Sigmoid colon (tissue), 7 donors: ENCODE measurements at regions of chr17 and their contacts with region 1.

Region 1: DNA sequence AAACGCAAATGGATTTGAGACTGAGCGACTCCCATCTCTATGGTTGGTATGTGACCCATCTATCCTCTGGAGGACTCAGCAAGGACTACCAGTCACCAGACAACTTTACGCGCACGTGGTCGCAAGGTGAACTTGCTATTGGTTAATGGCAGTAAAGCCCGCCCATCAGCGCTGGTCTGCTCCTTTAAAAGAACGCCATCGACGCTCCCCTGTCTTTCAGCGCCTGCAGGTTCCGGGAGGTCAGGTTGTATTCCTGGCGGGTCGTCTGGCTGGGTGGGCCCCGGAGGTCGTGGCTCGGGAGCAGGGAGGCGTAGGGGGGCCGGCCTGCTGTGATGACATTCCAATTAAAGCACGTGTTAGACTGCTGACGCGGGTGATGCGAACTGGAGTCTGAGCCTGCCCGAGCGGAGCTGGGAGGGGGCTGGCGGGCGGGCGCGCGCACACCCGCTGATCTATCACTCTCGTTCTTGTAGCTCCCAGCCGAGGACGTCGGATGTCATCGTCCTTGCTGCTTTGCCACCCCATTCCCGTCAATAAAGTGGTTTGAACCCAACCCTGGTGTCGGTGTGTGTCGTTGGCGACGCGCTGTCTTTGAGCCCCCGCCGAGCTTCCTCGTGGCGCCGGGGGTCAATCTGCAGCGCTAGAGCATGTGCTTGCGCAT is 15.9 kb upstream of the ERN1 start:
- DNase-seq: peak; percentile 100
- H3K4me3 ChIP-seq: peak overlapping the region; percentile 62 to 89 (median 74)
- H3K27ac ChIP-seq: peak overlapping the region; percentile 91 to 96 (median 94)
- H3K4me1 ChIP-seq: peaks cover 0 to 26% (median 18%) of the 10 kb centered on the region in 4 donors
- H3K27me3 ChIP-seq: no peaks in the 10 kb centered on the region
- CTCF ChIP-seq: no peak
- EP300 ChIP-seq: peak in 1 of 4 donors; percentile 34
- POLR2A ChIP-seq: peak; percentile 98 to 99

Region 2: GRCh38 chr17:64129764-64130558 is 15.9 kb before region 1 on chr17 and contains the start of gene ERN1:
- intact Hi-C with region 1: loop called (anchors 1 kb)
- DNase-seq: peak; percentile 97
- H3K4me3 ChIP-seq: peak within 1 kb of the TSS; percentile 52 to 92 (median 79)
- H3K27ac ChIP-seq: peak within 1 kb of the TSS; percentile 96 to 99 (median 98)
- H3K4me1 ChIP-seq: peaks cover 0 to 32% (median 20%) of the 10 kb centered on the region in 4 donors
- H3K27me3 ChIP-seq: no peaks in the 10 kb centered on the region
- CTCF ChIP-seq: no peak
- EP300 ChIP-seq: no peak
- POLR2A ChIP-seq: peak; percentile 34 to 60
- total RNA-seq, gene ERN1: 7.1 to 9.4 (median 8.2) TPM

Region 3: GRCh38 chr17:64262417-64263260 is 116.8 kb after region 1 on chr17 and contains the start of gene TEX2:
- intact Hi-C with region 1: loop called (anchors 1 kb)
- DNase-seq: peak; percentile 78
- H3K4me3 ChIP-seq: peak within 1 kb of the TSS; percentile 98 to 99 (median 98)
- H3K27ac ChIP-seq: peak within 1 kb of the TSS; percentile 94 to 97 (median 94)
- H3K4me1 ChIP-seq: peaks cover 0 to 38% (median 29%) of the 10 kb centered on the region in 4 donors
- H3K27me3 ChIP-seq: no peaks in the 10 kb centered on the region
- CTCF ChIP-seq: no peak
- EP300 ChIP-seq: no peak
- POLR2A ChIP-seq: no peak
- total RNA-seq, gene TEX2: 39.3 to 50.7 (median 42.5) TPM

Region 4: DNA sequence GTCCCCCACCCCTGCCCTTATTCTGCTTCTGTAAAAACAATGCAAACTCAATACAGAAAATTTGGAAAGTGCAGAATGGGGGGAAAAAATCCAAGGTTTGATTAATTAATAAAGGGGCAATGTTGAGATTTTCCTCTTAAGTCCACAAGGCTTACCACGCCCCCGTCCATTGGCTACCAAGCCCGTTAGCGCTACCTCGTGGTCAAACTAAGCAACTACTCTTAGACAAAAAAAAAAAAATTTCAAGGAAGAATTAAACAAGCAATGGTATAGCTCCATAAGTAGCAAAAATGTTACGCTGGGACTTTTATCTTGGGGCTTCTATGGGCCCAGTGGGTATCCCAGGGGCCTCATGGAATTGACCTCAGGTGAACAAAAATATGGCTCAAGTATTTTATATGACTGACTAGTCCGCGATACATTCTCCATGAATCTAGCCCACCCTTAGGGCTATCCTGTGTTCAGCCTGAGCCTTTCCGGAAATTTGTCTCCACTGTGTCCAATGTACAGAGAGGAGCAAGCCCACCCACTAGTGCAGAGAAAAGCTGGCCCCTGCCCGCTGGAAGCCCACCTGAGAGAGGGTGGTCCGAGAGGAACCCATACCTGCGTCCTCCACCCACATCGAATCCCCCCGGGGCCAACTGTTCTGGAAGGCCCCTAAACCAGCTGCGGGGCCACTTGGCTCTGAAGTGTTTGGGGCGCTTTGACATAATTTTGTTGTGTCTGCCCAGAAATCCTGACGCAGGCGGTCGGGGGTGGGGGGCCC is 136.3 kb after region 1 on chr17:
- intact Hi-C with region 1: loop called (anchors 5 kb)
- DNase-seq: peak; percentile 82
- H3K4me3 ChIP-seq: no peak overlapping the region
- H3K27ac ChIP-seq: no peak overlapping the region
- H3K4me1 ChIP-seq: peaks cover 0 to 16% (median 9%) of the 10 kb centered on the region in 4 donors
- H3K27me3 ChIP-seq: no peaks in the 10 kb centered on the region
- CTCF ChIP-seq: peak; percentile 59 to 71 (median 64)
- EP300 ChIP-seq: no peak
- POLR2A ChIP-seq: no peak

Region 5: DNA sequence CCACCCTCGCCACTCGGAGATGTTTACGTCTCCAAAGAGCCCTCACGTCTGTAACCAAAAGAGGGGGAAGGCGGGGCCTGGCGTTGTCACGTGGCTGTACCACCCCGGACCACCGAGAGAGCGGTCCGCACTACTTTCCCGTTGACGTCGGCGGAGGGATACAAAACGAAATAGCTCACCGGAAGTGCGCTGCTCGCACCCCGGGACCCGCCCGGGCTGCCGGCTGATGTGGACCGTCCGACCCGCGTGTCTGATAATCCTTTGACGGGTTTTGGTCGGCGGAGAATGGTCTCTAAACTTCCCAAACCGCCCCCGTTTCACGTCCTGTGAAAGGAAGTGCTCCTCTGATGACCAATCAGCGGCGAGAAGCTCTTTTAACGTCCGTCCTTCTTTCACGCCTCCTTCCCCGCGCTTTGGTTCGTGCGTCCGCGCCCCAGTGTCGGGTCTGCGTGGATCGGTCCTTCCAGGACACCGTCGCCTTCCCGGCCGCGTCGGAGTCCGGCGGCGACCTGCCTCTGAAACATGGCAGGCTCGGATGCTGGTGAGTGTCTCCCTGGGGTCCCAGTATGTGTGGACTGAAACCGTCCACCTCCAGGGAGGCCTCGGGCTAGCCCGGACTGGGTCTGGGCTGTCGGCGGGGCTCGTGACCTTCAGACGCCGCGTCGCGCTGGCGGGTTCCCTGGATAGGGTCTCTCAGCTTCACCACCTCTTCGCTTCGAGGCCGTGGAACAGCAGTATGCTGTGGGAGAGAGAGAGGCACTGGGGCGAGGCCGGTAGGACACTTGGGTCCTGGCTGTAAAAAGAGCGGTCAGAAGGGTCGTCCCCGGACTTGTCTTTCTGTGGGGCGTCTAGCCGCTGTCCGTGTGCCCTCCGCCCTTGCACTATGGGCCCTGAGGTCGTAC is 360.9 kb after region 1 on chr17 and contains the start of gene CEP95:
- intact Hi-C with region 1: loop called (anchors 10 kb)
- DNase-seq: peak; percentile 99
- H3K4me3 ChIP-seq: peak within 1 kb of the TSS; percentile 78 to 90 (median 80)
- H3K27ac ChIP-seq: peak within 1 kb of the TSS; percentile 95 to 100 (median 98)
- H3K4me1 ChIP-seq: peaks cover 0 to 53% (median 48%) of the 10 kb centered on the region in 4 donors
- H3K27me3 ChIP-seq: no peaks in the 10 kb centered on the region
- CTCF ChIP-seq: no peak
- EP300 ChIP-seq: peak in 2 of 4 donors; percentile 13 to 34
- POLR2A ChIP-seq: peak; percentile 88 to 89
- total RNA-seq, gene CEP95: 34.9 to 74.5 (median 56.9) TPM